SK-N-SH (cell line): ENCODE measurements at regions of chr19 and their contacts with region 1.

Region 1: GRCh38 chr19:38975214-38975860 is at the start of gene FBXO17:
- DNase-seq: peak; percentile 90
- H3K4me3 ChIP-seq: peak within 1 kb of the TSS; percentile 64 to 81
- H3K27ac ChIP-seq: peak within 1 kb of the TSS; percentile 77 to 86
- H3K4me1 ChIP-seq: peaks cover 6 to 14% of the 10 kb centered on the region in 2 experiments
- H3K27me3 ChIP-seq: no peaks in the 10 kb centered on the region
- CTCF ChIP-seq: no peak
- EP300 ChIP-seq: no peak
- RAD21 ChIP-seq: no peak
- polyA plus RNA-seq, gene FBXO17: 30.8 and 40.7 TPM in 2 replicates

Region 2: GRCh38 chr19:38879400-38879751 is 96.0 kb before region 1 on chr19:
- CTCF ChIA-PET with region 1: no interaction called
- POLR2A ChIA-PET with region 1: no interaction called
- DNase-seq: peak; percentile 11
- H3K4me3 ChIP-seq: no peak overlapping the region
- H3K27ac ChIP-seq: no peak overlapping the region
- H3K4me1 ChIP-seq: peaks cover 0 to 14% of the 10 kb centered on the region in 2 experiments; a peak in 1 of 4 replicates
- H3K27me3 ChIP-seq: no peaks in the 10 kb centered on the region
- CTCF ChIP-seq: no peak
- EP300 ChIP-seq: no peak
- RAD21 ChIP-seq: no peak

Region 3: DNA sequence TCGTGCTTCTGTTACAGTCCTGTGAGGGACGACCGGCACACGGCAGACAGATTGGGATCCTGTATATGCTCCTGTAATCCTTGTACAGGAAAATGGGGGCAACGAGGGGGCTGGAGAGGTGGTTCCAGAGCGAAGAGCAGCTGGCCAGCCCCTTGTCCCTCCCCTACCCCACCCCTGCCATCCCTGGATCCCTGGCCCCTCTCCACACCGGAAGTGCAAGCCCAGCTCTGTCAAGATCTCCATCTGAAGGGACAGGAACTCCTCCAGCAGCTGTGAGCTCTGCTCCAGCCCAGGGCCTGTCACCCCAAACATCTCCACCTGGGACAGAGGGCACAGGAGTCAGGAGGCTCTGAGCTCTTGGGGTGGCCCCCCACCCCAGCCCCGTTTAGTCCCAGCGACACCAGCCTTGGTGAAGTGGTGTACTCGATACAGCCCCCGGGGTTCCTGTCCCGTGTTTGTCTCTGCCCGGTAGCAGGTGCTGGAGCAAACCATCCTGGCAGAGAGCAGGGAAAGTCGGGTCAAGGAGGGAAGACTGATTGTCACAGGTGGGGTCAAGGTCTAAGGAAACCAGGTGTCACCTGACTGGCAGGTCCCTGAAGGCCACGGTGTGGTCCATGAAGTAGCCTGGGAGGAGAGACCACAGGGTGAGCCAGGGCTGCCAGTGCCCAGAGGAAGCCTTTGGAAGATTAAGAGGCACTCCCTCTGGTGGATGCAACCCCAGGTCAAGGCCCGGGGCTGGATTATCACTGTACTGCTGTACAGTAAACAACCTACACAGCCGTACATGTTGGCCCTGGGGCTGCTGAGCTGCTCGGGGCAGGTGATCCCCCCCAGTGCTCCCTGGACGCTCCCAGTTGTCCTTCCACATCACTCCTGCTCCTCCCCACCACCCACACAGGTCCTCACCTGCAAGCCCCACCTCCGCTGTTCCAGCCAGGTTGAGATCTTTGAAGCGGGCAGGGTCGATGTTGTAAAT is 57.5 kb before region 1 on chr19:
- CTCF ChIA-PET with region 1: no interaction called
- POLR2A ChIA-PET with region 1: no interaction called
- DNase-seq: peak; percentile 83
- H3K4me3 ChIP-seq: no peak overlapping the region
- H3K27ac ChIP-seq: peak overlapping the region in 1 of 2 experiments; percentile 14; a peak in 1 of 4 replicates
- H3K4me1 ChIP-seq: peaks cover 0 to 10% of the 10 kb centered on the region in 2 experiments; a peak in 1 of 4 replicates
- H3K27me3 ChIP-seq: no peaks in the 10 kb centered on the region
- CTCF ChIP-seq: peak; percentile 24; the same call in 1 of the 2 replicates
- EP300 ChIP-seq: no peak
- RAD21 ChIP-seq: peak; percentile 26

Region 4: GRCh38 chr19:38964738-38965137 is 10.6 kb before region 1 on chr19:
- CTCF ChIA-PET with region 1: interaction called, 34 read pairs
- POLR2A ChIA-PET with region 1: interaction called, 3 read pairs
- DNase-seq: no peak
- H3K4me3 ChIP-seq: no peak overlapping the region
- H3K27ac ChIP-seq: no peak overlapping the region
- H3K4me1 ChIP-seq: peaks cover 0 to 2% of the 10 kb centered on the region in 2 experiments; a peak in 1 of 4 replicates
- H3K27me3 ChIP-seq: no peaks in the 10 kb centered on the region
- CTCF ChIP-seq: no peak
- EP300 ChIP-seq: no peak
- RAD21 ChIP-seq: no peak

Region 5: DNA sequence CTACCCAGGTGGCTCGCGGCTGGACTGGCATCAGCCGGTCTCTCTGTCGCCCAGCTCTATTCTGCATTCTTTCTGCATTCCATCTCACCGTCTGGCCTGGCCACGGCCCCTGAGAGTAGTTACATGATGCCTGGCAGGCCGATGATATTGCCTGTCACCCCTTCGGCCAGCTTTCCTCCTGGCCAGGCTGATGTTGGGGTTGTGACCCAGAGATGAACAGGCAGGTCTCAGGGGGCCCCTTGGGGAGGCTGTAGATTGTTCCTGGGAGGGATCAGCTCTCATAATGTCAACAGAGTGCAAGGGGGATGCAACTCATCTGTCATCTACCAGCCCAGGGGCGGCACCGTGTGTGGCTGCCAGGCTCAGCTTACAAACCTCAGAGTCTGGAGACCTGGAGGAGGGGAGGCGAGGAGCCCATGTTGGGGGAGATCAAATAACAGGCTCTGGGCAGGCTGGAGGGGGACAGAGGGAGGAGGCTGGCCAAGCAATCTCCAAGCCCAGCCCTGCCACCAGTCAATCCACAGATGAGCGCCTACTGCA is 13.8 kb after region 1 on chr19:
- CTCF ChIA-PET with region 1: interaction called, 21 read pairs
- POLR2A ChIA-PET with region 1: no interaction called
- DNase-seq: peak; percentile 30
- H3K4me3 ChIP-seq: no peak overlapping the region
- H3K27ac ChIP-seq: peak overlapping the region; percentile 7 to 20; a peak in 2 of 4 replicates
- H3K4me1 ChIP-seq: peaks cover 4 to 16% of the 10 kb centered on the region in 2 experiments; a peak in 2 of 4 replicates
- H3K27me3 ChIP-seq: no peaks in the 10 kb centered on the region
- CTCF ChIP-seq: no peak
- EP300 ChIP-seq: no peak
- RAD21 ChIP-seq: no peak

Region 6: GRCh38 chr19:39110263-39110967 is 135.1 kb after region 1 on chr19:
- CTCF ChIA-PET with region 1: no interaction called
- POLR2A ChIA-PET with region 1: no interaction called
- DNase-seq: peak; percentile 80
- H3K4me3 ChIP-seq: no peak overlapping the region
- H3K27ac ChIP-seq: no peak overlapping the region
- H3K4me1 ChIP-seq: peaks cover 0 to 8% of the 10 kb centered on the region in 2 experiments; a peak in 1 of 4 replicates
- H3K27me3 ChIP-seq: no peaks in the 10 kb centered on the region
- CTCF ChIP-seq: peak; percentile 77
- EP300 ChIP-seq: no peak
- RAD21 ChIP-seq: peak; percentile 75